Endothelial cell of umbilical vein (primary cell): ENCODE measurements at regions of chr11 and their contacts with region 1.

Region 1: DNA sequence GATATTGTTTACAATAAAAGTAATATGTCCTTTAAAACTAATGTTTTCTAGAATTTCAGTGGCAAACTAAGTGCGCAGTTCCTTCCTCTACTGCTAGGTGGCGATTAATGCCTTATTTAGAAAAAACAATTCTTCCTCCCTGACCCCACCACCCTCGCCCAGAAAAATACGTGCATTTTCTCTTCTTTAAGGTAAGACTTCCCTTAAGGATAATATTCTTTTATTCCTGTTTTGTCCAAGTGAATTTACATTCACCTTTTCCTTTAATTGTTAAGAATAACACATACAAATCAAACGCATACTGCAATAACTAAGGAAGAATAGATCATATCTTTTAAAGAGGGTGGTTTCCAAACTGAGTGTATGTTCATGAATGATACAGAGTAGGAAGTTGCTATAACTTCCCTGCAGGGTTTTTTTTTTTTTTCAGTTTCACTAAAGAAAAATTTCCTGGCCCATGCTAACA is 17.0 kb upstream of the PSMA1 start:
- DNase-seq: peak; percentile 60
- H3K4me3 ChIP-seq: no peak overlapping the region
- H3K27ac ChIP-seq: no peak overlapping the region
- H3K4me1 ChIP-seq: no peaks in the 10 kb centered on the region
- H3K27me3 ChIP-seq: peaks cover 9 to 10% of the 10 kb centered on the region in 2 experiments
- CTCF ChIP-seq: peak; percentile 53 to 62
- POLR2A ChIP-seq: no peak

Region 2: GRCh38 chr11:15006139-15006759 is 469.1 kb after region 1 on chr11:
- CTCF ChIA-PET with region 1: interaction called, 7 read pairs
- POLR2A ChIA-PET with region 1: no interaction called
- dilution Hi-C with region 1: no loop called
- intact Hi-C with region 1: loop called (anchors 1 kb)
- DNase-seq: peak; percentile 42
- H3K4me3 ChIP-seq: no peak overlapping the region
- H3K27ac ChIP-seq: no peak overlapping the region
- H3K4me1 ChIP-seq: no peaks in the 10 kb centered on the region
- H3K27me3 ChIP-seq: peaks cover 0 to 2% of the 10 kb centered on the region in 2 experiments
- CTCF ChIP-seq: peak in 1 of 2 donors; percentile 46
- POLR2A ChIP-seq: no peak

Region 3: GRCh38 chr11:15074206-15075161 is 537.3 kb after region 1 on chr11:
- CTCF ChIA-PET with region 1: interaction called, 4 read pairs
- POLR2A ChIA-PET with region 1: no interaction called
- dilution Hi-C with region 1: no loop called
- intact Hi-C with region 1: loop called (anchors 5 kb)
- DNase-seq: peak; percentile 53
- H3K4me3 ChIP-seq: no peak overlapping the region
- H3K27ac ChIP-seq: no peak overlapping the region
- H3K4me1 ChIP-seq: no peaks in the 10 kb centered on the region
- H3K27me3 ChIP-seq: peaks cover 15 to 18% of the 10 kb centered on the region in 2 experiments
- CTCF ChIP-seq: peak; percentile 65 to 81
- POLR2A ChIP-seq: no peak